ENCODE measurements at regions of chr21 and their contacts with region 1.

Region 1: DNA sequence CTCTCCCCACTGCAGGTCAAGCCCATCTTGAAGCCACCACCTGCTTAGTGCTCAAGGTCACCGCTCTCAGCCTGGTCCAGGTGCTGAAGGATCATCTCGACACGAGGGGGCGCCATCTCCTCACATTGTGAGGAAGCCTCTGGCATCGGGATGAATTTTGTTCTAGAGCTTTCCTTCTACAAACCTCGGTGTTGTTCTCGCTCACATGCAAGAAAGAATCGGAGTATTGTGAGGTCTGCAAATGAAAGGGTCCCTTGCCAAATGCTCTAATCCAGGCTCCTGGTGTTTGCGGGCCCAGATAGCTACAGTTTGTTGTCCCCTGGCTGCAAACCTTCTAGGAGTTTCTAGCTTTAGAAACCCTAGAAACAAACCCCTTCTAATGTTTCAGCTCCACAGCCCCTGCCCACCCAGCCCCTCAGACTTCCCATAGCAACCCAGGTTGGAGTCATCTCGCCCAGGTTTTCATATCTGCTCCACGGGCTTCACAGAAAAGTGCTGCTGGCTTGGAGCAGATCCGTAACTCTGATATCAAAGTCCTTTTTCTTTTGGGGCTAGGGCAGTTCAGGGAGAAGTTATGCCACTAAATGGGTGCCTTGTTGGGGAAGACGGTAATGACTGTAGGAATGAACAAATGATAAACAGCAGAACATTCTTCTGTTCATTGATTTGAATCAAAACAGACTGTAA is 8.6 kb upstream of the ATP5PO start:
- DNase-seq: peak; percentile 73 to 90 (median 83)
- ATAC-seq: peak; percentile 97
- H3K4me3 ChIP-seq: no peak overlapping the region
- H3K4me3 Mint-ChIP-seq: peak overlapping the region in 7 of 10 donors; percentile 25 to 58 (median 45)
- H3K27ac ChIP-seq: no peak overlapping the region
- H3K27ac Mint-ChIP-seq: peak overlapping the region; percentile 5 to 84 (median 75)
- H3K4me1 ChIP-seq: peaks cover 4 to 5% of the 10 kb centered on the region in 2 donors
- H3K4me1 Mint-ChIP-seq: peaks cover 0 to 21% (median 8%) of the 10 kb centered on the region in 7 donors
- H3K27me3 ChIP-seq: no peaks in the 10 kb centered on the region
- H3K27me3 Mint-ChIP-seq: peaks cover 0 to 3% (median 0%) of the 10 kb centered on the region in 5 donors

Region 2: DNA sequence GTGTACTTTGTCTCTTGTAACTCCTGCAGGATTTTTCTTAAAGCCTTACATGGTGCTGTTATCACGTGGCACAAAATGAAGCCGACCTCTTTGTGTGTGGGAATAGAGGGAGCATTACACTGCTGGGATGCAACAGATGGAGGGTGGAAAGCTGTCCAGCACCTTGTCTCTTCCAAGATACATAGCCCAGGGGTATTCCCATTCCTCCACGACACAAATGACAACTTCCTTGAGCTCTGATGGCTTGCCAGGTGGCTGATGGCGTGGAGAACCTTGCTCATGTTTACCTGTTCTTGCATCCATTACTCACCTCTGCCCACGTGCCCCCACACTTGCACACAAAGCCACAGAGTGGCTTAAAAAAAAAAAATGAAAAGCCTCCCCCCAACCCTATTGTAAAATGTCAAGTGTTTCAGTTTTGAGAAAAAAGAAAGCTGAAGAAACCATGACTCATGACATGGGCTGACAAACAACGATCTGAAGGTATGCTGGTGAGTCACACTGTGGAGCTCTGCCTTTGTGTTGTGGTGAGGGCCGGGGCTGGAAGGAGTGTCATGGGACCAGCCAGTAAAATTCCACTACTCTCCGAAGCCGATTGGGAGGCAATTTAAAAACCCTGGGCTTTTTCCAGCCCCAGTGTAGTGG is 23.4 kb after region 1 on chr21:
- CTCF ChIA-PET with region 1: interaction called, 48 read pairs
- POLR2A ChIA-PET with region 1: interaction called, 51 read pairs
- intact Hi-C with region 1: loop called in 1 of 2 experiments (anchors 2 kb)
- DNase-seq: peak; percentile 47 to 95 (median 84)
- ATAC-seq: peak; percentile 76
- H3K4me3 ChIP-seq: peak overlapping the region; percentile 38
- H3K4me3 Mint-ChIP-seq: peak overlapping the region; percentile 71 to 87 (median 78)
- H3K27ac ChIP-seq: peak overlapping the region; percentile 93
- H3K27ac Mint-ChIP-seq: peak overlapping the region; percentile 98 to 100 (median 98)
- H3K4me1 ChIP-seq: peaks cover 56 to 64% of the 10 kb centered on the region in 2 donors
- H3K4me1 Mint-ChIP-seq: peaks cover 53 to 85% (median 77%) of the 10 kb centered on the region in 7 donors
- H3K27me3 ChIP-seq: no peaks in the 10 kb centered on the region
- H3K27me3 Mint-ChIP-seq: peaks cover 0 to 6% (median 0%) of the 10 kb centered on the region in 5 donors

Region 3: GRCh38 chr21:33976082-33977016 is 52.1 kb after region 1 on chr21:
- CTCF ChIA-PET with region 1: interaction called, 4 read pairs
- POLR2A ChIA-PET with region 1: interaction called, 3 read pairs
- intact Hi-C with region 1: loop called in 1 of 2 experiments (anchors 2 kb)
- DNase-seq: peak in 8 of 9 donors; percentile 23 to 62 (median 32)
- ATAC-seq: peak; percentile 62
- H3K4me3 ChIP-seq: peak overlapping the region; percentile 18
- H3K4me3 Mint-ChIP-seq: peak overlapping the region; percentile 43 to 78 (median 72)
- H3K27ac ChIP-seq: peak overlapping the region; percentile 64
- H3K27ac Mint-ChIP-seq: peak overlapping the region; percentile 79 to 99 (median 86)
- H3K4me1 ChIP-seq: peaks cover 28 to 32% of the 10 kb centered on the region in 2 donors
- H3K4me1 Mint-ChIP-seq: peaks cover 36 to 73% (median 53%) of the 10 kb centered on the region in 7 donors
- H3K27me3 ChIP-seq: no peaks in the 10 kb centered on the region
- H3K27me3 Mint-ChIP-seq: no peaks in the 10 kb centered on the region

Region 4: GRCh38 chr21:34073032-34073869 is 149.0 kb after region 1 on chr21 and contains the starts of genes MRPS6 and SLC5A3:
- CTCF ChIA-PET with region 1: interaction called, 24 read pairs
- POLR2A ChIA-PET with region 1: interaction called, 10 read pairs
- intact Hi-C with region 1: loop called (anchors 2 kb)
- DNase-seq: peak; percentile 58 to 82 (median 72)
- ATAC-seq: peak; percentile 89
- H3K4me3 ChIP-seq: peak within 1 kb of the TSS; percentile 72
- H3K4me3 Mint-ChIP-seq: peak within 1 kb of the TSS; percentile 88 to 98 (median 96)
- H3K27ac ChIP-seq: peak within 1 kb of the TSS; percentile 82
- H3K27ac Mint-ChIP-seq: peak within 1 kb of the TSS; percentile 89 to 95 (median 93)
- H3K4me1 ChIP-seq: peaks cover 31 to 34% of the 10 kb centered on the region in 2 donors
- H3K4me1 Mint-ChIP-seq: peaks cover 9 to 54% (median 46%) of the 10 kb centered on the region in 7 donors
- H3K27me3 ChIP-seq: no peaks in the 10 kb centered on the region
- H3K27me3 Mint-ChIP-seq: peaks cover 0 to 7% (median 0%) of the 10 kb centered on the region in 5 donors
- total RNA-seq, gene MRPS6: 25.5 to 92.7 (median 87.9) TPM
- total RNA-seq, gene SLC5A3: 8.8 to 45.5 (median 34.0) TPM

Region 5: GRCh38 chr21:34129039-34129891 is 205.0 kb after region 1 on chr21:
- CTCF ChIA-PET with region 1: interaction called, 33 read pairs
- POLR2A ChIA-PET with region 1: no interaction called
- intact Hi-C with region 1: loop called (anchors 2 kb)
- DNase-seq: peak; percentile 9 to 86 (median 78)
- ATAC-seq: peak; percentile 92
- H3K4me3 ChIP-seq: peak overlapping the region; percentile 22
- H3K4me3 Mint-ChIP-seq: peak overlapping the region; percentile 64 to 82 (median 76)
- H3K27ac ChIP-seq: peak overlapping the region; percentile 64
- H3K27ac Mint-ChIP-seq: peak overlapping the region; percentile 72 to 97 (median 90)
- H3K4me1 ChIP-seq: peaks cover 4 to 67% of the 10 kb centered on the region in 2 donors
- H3K4me1 Mint-ChIP-seq: peaks cover 69 to 99% (median 95%) of the 10 kb centered on the region in 7 donors
- H3K27me3 ChIP-seq: no peaks in the 10 kb centered on the region
- H3K27me3 Mint-ChIP-seq: no peaks in the 10 kb centered on the region

Region 6: GRCh38 chr21:34243562-34243961 is 319.3 kb after region 1 on chr21:
- CTCF ChIA-PET with region 1: interaction called, 7 read pairs
- POLR2A ChIA-PET with region 1: no interaction called
- intact Hi-C with region 1: loop called (anchors 1 to 5 kb)
- DNase-seq: peak in 5 of 9 donors; percentile 1 to 25 (median 3)
- ATAC-seq: no peak
- H3K4me3 ChIP-seq: no peak overlapping the region
- H3K4me3 Mint-ChIP-seq: no peak overlapping the region
- H3K27ac ChIP-seq: no peak overlapping the region
- H3K27ac Mint-ChIP-seq: peak overlapping the region in 1 of 9 donors; percentile 24
- H3K4me1 ChIP-seq: no peaks in the 10 kb centered on the region
- H3K4me1 Mint-ChIP-seq: peaks cover 0 to 6% (median 0%) of the 10 kb centered on the region in 7 donors
- H3K27me3 ChIP-seq: no peaks in the 10 kb centered on the region
- H3K27me3 Mint-ChIP-seq: peaks cover 0 to 4% (median 0%) of the 10 kb centered on the region in 5 donors

Region 7: GRCh38 chr21:34351786-34352241 is 427.6 kb after region 1 on chr21:
- CTCF ChIA-PET with region 1: interaction called, 126 read pairs
- POLR2A ChIA-PET with region 1: interaction called, 17 read pairs
- intact Hi-C with region 1: loop called (anchors 1 kb)
- DNase-seq: peak in 2 of 9 donors; percentile 16 to 23
- ATAC-seq: peak; percentile 69
- H3K4me3 ChIP-seq: no peak overlapping the region
- H3K4me3 Mint-ChIP-seq: no peak overlapping the region
- H3K27ac ChIP-seq: no peak overlapping the region
- H3K27ac Mint-ChIP-seq: no peak overlapping the region
- H3K4me1 ChIP-seq: no peaks in the 10 kb centered on the region
- H3K4me1 Mint-ChIP-seq: peaks cover 0 to 11% (median 8%) of the 10 kb centered on the region in 7 donors
- H3K27me3 ChIP-seq: no peaks in the 10 kb centered on the region
- H3K27me3 Mint-ChIP-seq: peaks cover 10 to 25% (median 22%) of the 10 kb centered on the region in 5 donors

Measured in naive thymus-derived CD4-positive, alpha-beta T cell (primary cell).